CD8-positive, alpha-beta T cell (primary cell): ENCODE measurements at regions of chr1 and their contacts with region 1.

Region 1: GRCh38 chr1:230642263-230642959 is at the start of gene COG2:
- DNase-seq: peak; percentile 92 to 99 (median 96)
- ATAC-seq: peak; percentile 96
- H3K4me3 ChIP-seq: peak within 1 kb of the TSS; percentile 72 to 92
- H3K4me3 Mint-ChIP-seq: peak within 1 kb of the TSS; percentile 99
- H3K27ac ChIP-seq: peak within 1 kb of the TSS; percentile 73 to 82
- H3K27ac Mint-ChIP-seq: peak within 1 kb of the TSS; percentile 96
- H3K4me1 ChIP-seq: peaks cover 36% of the 10 kb centered on the region
- H3K4me1 Mint-ChIP-seq: peaks cover 54% of the 10 kb centered on the region
- H3K27me3 ChIP-seq: peaks cover 0 to 2% of the 10 kb centered on the region in 2 experiments
- H3K27me3 Mint-ChIP-seq: peaks cover 13% of the 10 kb centered on the region
- CTCF ChIP-seq: peak; percentile 100
- total RNA-seq, gene COG2: 20.1 to 25.7 TPM

Region 2: DNA sequence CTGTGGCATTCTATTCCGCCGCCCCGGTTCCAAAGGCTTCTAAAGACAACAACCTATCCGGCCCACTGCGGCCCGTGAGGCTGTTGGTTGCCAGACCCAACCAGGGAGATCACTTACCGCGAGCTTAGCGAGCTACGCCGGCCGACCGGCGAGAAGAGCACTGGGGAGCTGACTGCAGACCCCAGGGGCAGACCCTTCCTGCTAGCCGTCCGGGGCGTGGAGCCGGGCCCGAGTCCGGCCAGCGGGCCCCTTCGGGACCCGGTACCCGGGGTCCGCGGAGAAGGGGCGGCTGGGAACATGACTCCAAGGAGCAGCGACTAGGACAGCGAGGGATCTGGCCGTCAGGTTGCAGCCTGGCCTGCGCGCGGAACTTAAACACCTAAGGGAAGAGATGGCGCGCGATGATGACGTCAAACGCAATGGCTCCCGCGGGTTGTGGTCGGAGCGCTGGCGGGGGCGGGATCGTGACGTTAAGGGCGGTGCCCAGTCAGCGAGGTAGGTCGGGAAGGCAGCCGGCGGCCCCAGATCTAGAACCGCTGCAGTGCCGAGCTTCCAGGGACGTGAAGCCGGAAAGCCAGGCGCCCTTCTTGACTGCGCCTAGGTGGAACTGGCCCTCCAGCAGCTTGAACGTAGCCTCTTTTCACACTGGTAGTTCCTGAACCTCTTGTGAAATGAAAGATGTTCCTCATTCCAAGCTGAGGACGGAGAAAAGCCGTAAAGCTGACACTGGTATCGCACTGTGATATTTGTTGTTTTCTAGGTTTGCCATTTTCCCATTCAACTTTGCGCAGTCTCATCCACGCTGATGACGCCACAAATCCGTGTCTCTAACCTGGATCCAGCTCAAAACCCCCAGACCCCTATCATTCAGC is 1134.2 kb before region 1 on chr1 and contains the start of gene NUP133:
- CTCF ChIA-PET with region 1: no interaction called
- POLR2A ChIA-PET with region 1: no interaction called
- intact Hi-C with region 1: loop called in 1 of 2 experiments (anchors 5 kb)
- DNase-seq: peak; percentile 96 to 100 (median 99)
- ATAC-seq: peak; percentile 94
- H3K4me3 ChIP-seq: peak within 1 kb of the TSS; percentile 94 to 99
- H3K4me3 Mint-ChIP-seq: peak within 1 kb of the TSS; percentile 87
- H3K27ac ChIP-seq: peak within 1 kb of the TSS; percentile 93 to 97
- H3K27ac Mint-ChIP-seq: peak within 1 kb of the TSS; percentile 99
- H3K4me1 ChIP-seq: peaks cover 20% of the 10 kb centered on the region
- H3K4me1 Mint-ChIP-seq: peaks cover 29% of the 10 kb centered on the region
- H3K27me3 ChIP-seq: no peaks in the 10 kb centered on the region
- H3K27me3 Mint-ChIP-seq: no peaks in the 10 kb centered on the region
- CTCF ChIP-seq: no peak
- total RNA-seq, gene NUP133: 49.0 to 50.7 TPM

Region 3: DNA sequence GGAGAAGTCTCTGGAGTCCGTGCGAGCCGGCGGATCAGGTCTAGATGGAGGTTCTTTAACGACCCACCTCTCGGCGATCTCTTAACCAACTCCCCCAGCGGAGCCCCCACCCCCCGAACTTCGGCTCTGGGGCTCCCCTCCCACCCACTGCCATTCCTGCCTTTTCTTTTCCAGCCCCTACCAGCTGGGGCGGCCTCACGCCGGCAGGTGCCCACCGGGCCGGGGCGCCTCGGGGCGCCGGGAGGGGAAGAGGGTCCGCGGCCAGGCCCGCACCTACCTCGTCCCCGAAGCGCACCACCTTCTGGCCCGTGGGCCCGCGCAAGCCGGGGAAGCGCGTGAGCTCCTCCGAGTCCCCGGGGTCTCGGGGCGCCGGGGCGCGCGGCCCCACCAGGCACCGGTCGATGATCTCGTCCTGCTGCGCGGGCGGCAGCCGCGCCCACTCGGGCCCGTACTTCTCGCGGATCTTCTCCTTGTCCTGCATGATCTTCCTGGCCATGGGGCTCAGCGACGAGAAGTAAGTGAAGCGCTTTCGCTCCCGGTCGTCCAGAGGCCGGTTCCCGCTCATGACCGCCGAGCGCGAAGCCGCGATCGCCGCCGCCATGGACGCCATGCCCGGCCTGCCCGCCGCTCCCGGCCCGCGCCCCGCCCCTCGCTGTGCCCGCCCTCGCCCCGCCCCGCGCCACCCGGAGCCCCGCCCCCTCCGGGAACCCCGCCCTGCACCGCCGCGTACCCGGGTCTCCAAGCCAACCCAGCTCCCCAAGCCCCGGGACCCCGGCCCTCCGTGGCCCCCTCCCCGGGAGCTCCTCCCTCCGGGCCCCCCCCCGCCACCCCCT is 225.7 kb after region 1 on chr1 and contains the start of gene C1orf198:
- CTCF ChIA-PET with region 1: no interaction called
- POLR2A ChIA-PET with region 1: no interaction called
- intact Hi-C with region 1: loop called (anchors 1 to 5 kb)
- DNase-seq: peak; percentile 53 to 88 (median 72)
- ATAC-seq: peak; percentile 93
- H3K4me3 ChIP-seq: peak within 1 kb of the TSS; percentile 65 to 79
- H3K4me3 Mint-ChIP-seq: peak within 1 kb of the TSS; percentile 89
- H3K27ac ChIP-seq: peak within 1 kb of the TSS in 1 of 2 experiments; percentile 57
- H3K27ac Mint-ChIP-seq: peak within 1 kb of the TSS; percentile 49
- H3K4me1 ChIP-seq: peaks cover 14% of the 10 kb centered on the region
- H3K4me1 Mint-ChIP-seq: peaks cover 21% of the 10 kb centered on the region
- H3K27me3 ChIP-seq: no peaks in the 10 kb centered on the region
- H3K27me3 Mint-ChIP-seq: peaks cover 18% of the 10 kb centered on the region
- CTCF ChIP-seq: no peak
- total RNA-seq, gene C1orf198: 3.2 to 3.8 TPM

Region 4: GRCh38 chr1:231240883-231241735 is 598.7 kb after region 1 on chr1 and contains the start of gene GNPAT:
- CTCF ChIA-PET with region 1: no interaction called
- POLR2A ChIA-PET with region 1: interaction called, 4 read pairs
- intact Hi-C with region 1: loop called in 1 of 2 experiments (anchors 5 kb)
- DNase-seq: peak; percentile 84 to 96 (median 91)
- ATAC-seq: peak; percentile 96
- H3K4me3 ChIP-seq: peak within 1 kb of the TSS; percentile 77
- H3K4me3 Mint-ChIP-seq: peak within 1 kb of the TSS; percentile 88
- H3K27ac ChIP-seq: peak within 1 kb of the TSS; percentile 79 to 80
- H3K27ac Mint-ChIP-seq: peak within 1 kb of the TSS; percentile 91
- H3K4me1 ChIP-seq: peaks cover 35% of the 10 kb centered on the region
- H3K4me1 Mint-ChIP-seq: peaks cover 78% of the 10 kb centered on the region
- H3K27me3 ChIP-seq: no peaks in the 10 kb centered on the region
- H3K27me3 Mint-ChIP-seq: no peaks in the 10 kb centered on the region
- CTCF ChIP-seq: no peak
- total RNA-seq, gene GNPAT: 10.4 to 11.0 TPM